OCI-LY7 (cell line): ENCODE measurements at regions of chr2 and their contacts with region 1.

Region 1: DNA sequence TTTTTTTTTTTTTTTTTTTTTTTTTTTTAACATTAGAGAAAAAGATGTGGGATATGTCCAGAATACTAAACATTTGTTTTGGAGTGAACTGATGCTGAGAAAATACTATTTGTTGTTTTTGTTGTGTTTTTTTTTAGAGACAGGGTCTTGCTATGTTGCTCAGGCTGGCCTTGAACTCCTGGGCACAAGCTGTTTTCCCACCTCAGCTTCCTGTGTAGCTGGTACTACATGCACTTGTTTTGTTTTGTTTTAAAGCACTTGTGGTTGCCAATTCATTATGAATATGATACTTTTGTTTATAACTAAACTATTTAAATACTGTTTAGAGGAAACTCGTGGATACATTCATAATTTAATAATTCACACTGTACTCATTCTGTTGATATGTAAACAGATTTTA is 33.4 kb upstream of the DYSF start:
- DNase-seq: no peak
- H3K4me3 ChIP-seq: no peak overlapping the region
- H3K27ac ChIP-seq: no peak overlapping the region
- H3K4me1 ChIP-seq: no peaks in the 10 kb centered on the region
- CTCF ChIP-seq: no peak

Region 2: GRCh38 chr2:70226781-70227180 is 1193.2 kb before region 1 on chr2:
- CTCF ChIA-PET with region 1: no interaction called
- POLR2A ChIA-PET with region 1: no interaction called
- intact Hi-C with region 1: no loop called
- DNase-seq: no peak
- H3K4me3 ChIP-seq: no peak overlapping the region
- H3K27ac ChIP-seq: no peak overlapping the region
- H3K4me1 ChIP-seq: no peaks in the 10 kb centered on the region
- CTCF ChIP-seq: no peak

Region 3: GRCh38 chr2:71263386-71263785 is 156.6 kb before region 1 on chr2:
- CTCF ChIA-PET with region 1: no interaction called
- POLR2A ChIA-PET with region 1: no interaction called
- intact Hi-C with region 1: no loop called
- DNase-seq: no peak
- H3K4me3 ChIP-seq: no peak overlapping the region
- H3K27ac ChIP-seq: no peak overlapping the region
- H3K4me1 ChIP-seq: no peaks in the 10 kb centered on the region
- CTCF ChIP-seq: no peak

Region 4: GRCh38 chr2:71385012-71385411 is 35.0 kb before region 1 on chr2:
- CTCF ChIA-PET with region 1: no interaction called
- POLR2A ChIA-PET with region 1: interaction called, 11 read pairs
- intact Hi-C with region 1: no loop called
- DNase-seq: no peak
- H3K4me3 ChIP-seq: no peak overlapping the region
- H3K27ac ChIP-seq: no peak overlapping the region
- H3K4me1 ChIP-seq: no peaks in the 10 kb centered on the region
- CTCF ChIP-seq: no peak